Posterior vena cava (tissue), 2 donors: ENCODE measurements at regions of chr15 and their contacts with region 1.

Region 1: GRCh38 chr15:50219820-50220219 is 37.8 kb downstream of the SLC27A2 start:
- DNase-seq: no peak

Region 2: GRCh38 chr15:50059883-50060282 is 159.9 kb before region 1 on chr15:
- intact Hi-C with region 1: loop called in 1 of 2 experiments (anchors 5 kb)
- DNase-seq: peak; percentile 80

Region 3: GRCh38 chr15:50247819-50248655 is 28.2 kb after region 1 on chr15:
- intact Hi-C with region 1: no loop called
- DNase-seq: no peak

Region 4: GRCh38 chr15:50280271-50280670 is 60.5 kb after region 1 on chr15:
- intact Hi-C with region 1: no loop called
- DNase-seq: no peak